ENCODE measurements at regions of chr5 and their contacts with region 1.

Region 1: GRCh38 chr5:156326718-156327259 is at the start of gene SGCD:
- DNase-seq: peak; percentile 78
- ATAC-seq: peak; percentile 93
- total RNA-seq, gene SGCD: 32.9 TPM

Region 2: DNA sequence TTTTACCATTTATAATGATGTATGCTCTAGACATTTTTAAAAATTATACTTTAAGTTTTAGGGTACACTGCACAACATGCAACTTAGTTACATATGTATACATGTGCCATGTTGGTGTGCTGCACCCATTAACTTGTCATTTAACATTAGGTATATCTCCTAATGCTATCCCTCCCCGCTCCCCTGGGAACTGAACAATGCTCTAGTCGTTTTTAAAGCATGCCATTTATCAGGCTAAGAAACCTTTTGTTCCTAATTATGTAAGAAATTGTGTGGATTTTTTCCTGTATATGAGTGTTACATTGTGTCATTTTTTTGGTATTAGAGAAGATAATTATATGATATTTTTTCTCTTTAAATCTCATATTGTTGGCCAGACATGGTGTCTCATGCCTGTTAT is 72.6 kb before region 1 on chr5:
- intact Hi-C with region 1: no loop called
- DNase-seq: no peak
- ATAC-seq: no peak

Region 3: DNA sequence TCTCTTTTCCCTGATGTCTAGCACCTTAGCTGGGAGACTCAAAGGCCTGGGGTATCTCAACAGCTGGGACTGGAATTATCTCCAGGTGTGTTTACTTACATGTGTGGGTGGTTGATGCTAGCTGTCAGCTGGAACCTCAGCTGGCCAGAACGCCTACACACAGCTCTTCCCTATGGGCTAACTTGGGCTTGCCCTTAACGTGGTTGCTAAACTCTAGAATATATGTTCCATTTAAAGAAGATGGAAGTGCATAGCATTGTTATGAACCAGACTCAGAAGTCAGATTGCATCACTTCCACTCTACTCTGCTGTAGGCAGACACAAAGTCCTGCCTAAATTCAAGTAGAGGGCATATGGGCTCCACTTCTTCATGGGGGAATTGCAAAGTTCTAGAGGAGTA is 29.4 kb after region 1 on chr5:
- intact Hi-C with region 1: loop called (anchors 1 kb)
- DNase-seq: no peak
- ATAC-seq: no peak

Measured in sciatic nerve (tissue), 2 donors.